Panc1 (cell line): ENCODE measurements at regions of chr1 and their contacts with region 1.

Region 1: GRCh38 chr1:243667591-243667990 is 182.5 kb downstream of the AKT3 start:
- DNase-seq: no peak
- ATAC-seq: no peak
- H3K4me3 ChIP-seq: no peak overlapping the region
- H3K27ac ChIP-seq: no peak overlapping the region
- H3K4me1 ChIP-seq: no peaks in the 10 kb centered on the region
- H3K27me3 ChIP-seq: no peaks in the 10 kb centered on the region
- CTCF ChIP-seq: no peak

Region 2: GRCh38 chr1:243623841-243624240 is 43.8 kb before region 1 on chr1:
- CTCF ChIA-PET with region 1: interaction called, 10 read pairs
- POLR2A ChIA-PET with region 1: no interaction called
- in situ Hi-C with region 1: no loop called
- intact Hi-C with region 1: no loop called
- DNase-seq: no peak
- ATAC-seq: no peak
- H3K4me3 ChIP-seq: no peak overlapping the region
- H3K27ac ChIP-seq: no peak overlapping the region
- H3K4me1 ChIP-seq: no peaks in the 10 kb centered on the region
- H3K27me3 ChIP-seq: no peaks in the 10 kb centered on the region
- CTCF ChIP-seq: no peak

Region 3: DNA sequence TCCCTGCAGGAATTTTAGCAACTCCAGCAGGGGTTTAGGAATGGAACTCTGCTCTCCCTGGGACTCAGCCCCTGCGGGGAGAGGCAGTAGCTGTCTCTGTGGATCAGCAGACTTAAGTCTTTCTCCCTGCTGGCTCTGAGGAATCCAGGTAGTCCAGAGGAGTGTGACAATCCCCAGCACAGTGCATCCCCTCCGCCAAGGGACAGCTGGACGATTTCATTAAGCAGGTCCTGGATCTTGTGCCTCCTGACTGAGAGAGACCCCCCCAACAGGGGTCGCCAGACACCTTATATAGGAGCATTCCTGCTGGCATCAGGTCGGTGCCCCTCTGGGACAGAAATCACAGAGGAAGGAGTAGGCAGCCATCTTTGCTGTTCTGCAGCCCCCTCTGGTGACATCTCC is 151.8 kb after region 1 on chr1:
- CTCF ChIA-PET with region 1: no interaction called
- POLR2A ChIA-PET with region 1: no interaction called
- in situ Hi-C with region 1: no loop called
- intact Hi-C with region 1: no loop called
- DNase-seq: no peak
- ATAC-seq: no peak
- H3K4me3 ChIP-seq: no peak overlapping the region
- H3K27ac ChIP-seq: no peak overlapping the region
- H3K4me1 ChIP-seq: no peaks in the 10 kb centered on the region
- H3K27me3 ChIP-seq: no peaks in the 10 kb centered on the region
- CTCF ChIP-seq: no peak